ENCODE measurements at regions of chr3 and their contacts with region 1.

Region 1: GRCh38 chr3:141959921-141960554 is 83.6 kb downstream of the ATP1B3 start:
- DNase-seq: no peak
- H3K4me3 Mint-ChIP-seq: no peak overlapping the region
- H3K27ac Mint-ChIP-seq: no peak overlapping the region
- H3K4me1 Mint-ChIP-seq: peaks cover 3% of the 10 kb centered on the region
- H3K27me3 Mint-ChIP-seq: no peaks in the 10 kb centered on the region

Region 2: GRCh38 chr3:142129516-142130171 is 169.6 kb after region 1 on chr3:
- CTCF ChIA-PET with region 1: interaction called, 5 read pairs
- POLR2A ChIA-PET with region 1: interaction called, 3 read pairs
- intact Hi-C with region 1: loop called (anchors 5 kb)
- DNase-seq: no peak
- H3K4me3 Mint-ChIP-seq: no peak overlapping the region
- H3K27ac Mint-ChIP-seq: no peak overlapping the region
- H3K4me1 Mint-ChIP-seq: no peaks in the 10 kb centered on the region
- H3K27me3 Mint-ChIP-seq: no peaks in the 10 kb centered on the region